Body of pancreas (tissue), 4 donors: ENCODE measurements at regions of chr11 and their contacts with region 1.

Region 1: GRCh38 chr11:60756307-60757032 is at the start of gene MS4A15:
- DNase-seq: peak; percentile 40 to 57 (median 50)
- ATAC-seq: peak; percentile 81
- H3K4me3 ChIP-seq: no peak within 1 kb of the TSS
- H3K27ac ChIP-seq: peak within 1 kb of the TSS; percentile 7 to 48 (median 24)
- H3K4me1 ChIP-seq: peaks cover 8% of the 10 kb centered on the region
- H3K27me3 ChIP-seq: no peaks in the 10 kb centered on the region
- CTCF ChIP-seq: peak; percentile 26 to 80 (median 67)
- POLR2A ChIP-seq: no peak
- total RNA-seq, gene MS4A15: not detected

Region 2: DNA sequence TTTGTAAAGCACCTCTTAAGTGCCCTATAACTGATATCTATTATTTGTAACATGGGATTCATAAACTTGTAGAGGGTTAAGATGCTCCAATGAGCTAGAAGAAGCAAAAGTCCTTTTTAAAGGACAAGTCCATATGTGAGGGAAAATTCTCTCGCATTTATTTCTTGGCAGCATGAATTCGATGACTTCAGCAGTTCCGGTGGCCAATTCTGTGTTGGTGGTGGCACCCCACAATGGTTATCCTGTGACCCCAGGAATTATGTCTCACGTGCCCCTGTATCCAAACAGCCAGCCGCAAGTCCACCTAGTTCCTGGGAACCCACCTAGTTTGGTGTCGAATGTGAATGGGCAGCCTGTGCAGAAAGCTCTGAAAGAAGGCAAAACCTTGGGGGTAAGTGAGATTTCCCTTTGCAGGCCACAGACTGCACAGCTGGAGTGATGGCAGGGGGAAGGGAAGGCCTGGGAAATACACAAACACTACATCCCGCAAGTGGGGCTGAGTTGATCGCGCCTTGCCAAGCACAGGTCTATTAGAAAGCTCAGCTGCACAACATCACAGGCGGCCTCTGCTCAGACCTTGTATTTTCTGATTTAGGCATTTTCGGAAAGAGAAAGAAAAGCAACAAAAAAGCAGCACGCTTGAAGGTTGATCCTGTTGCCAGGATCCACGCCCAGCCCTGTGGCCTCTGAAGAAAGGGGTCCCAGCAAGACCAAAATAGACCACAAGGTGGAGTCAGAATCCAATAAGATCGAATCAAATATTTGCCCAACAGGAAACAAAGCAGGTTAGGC is 55.6 kb before region 1 on chr11:
- intact Hi-C with region 1: loop called (anchors 10 kb)
- DNase-seq: peak; percentile 56 to 72 (median 70)
- ATAC-seq: peak; percentile 66
- H3K4me3 ChIP-seq: no peak overlapping the region
- H3K27ac ChIP-seq: no peak overlapping the region
- H3K4me1 ChIP-seq: peaks cover 52% of the 10 kb centered on the region
- H3K27me3 ChIP-seq: no peaks in the 10 kb centered on the region
- CTCF ChIP-seq: peak; percentile 43 to 88 (median 75)
- POLR2A ChIP-seq: no peak

Region 3: GRCh38 chr11:61297746-61298145 is 541.3 kb after region 1 on chr11:
- intact Hi-C with region 1: no loop called
- DNase-seq: peak in 2 of 4 donors; percentile 11 to 45
- ATAC-seq: no peak
- H3K4me3 ChIP-seq: no peak overlapping the region
- H3K27ac ChIP-seq: no peak overlapping the region
- H3K4me1 ChIP-seq: peaks cover 25% of the 10 kb centered on the region
- H3K27me3 ChIP-seq: peaks cover 0 to 5% of the 10 kb centered on the region in 2 donors
- CTCF ChIP-seq: no peak
- POLR2A ChIP-seq: no peak